Activated naive CD4-positive, alpha-beta T cell treated with anti-CD3 and anti-CD28 coated beads for 36 hours (primary cell): ENCODE measurements at regions of chr4 and their contacts with region 1.

Region 1: DNA sequence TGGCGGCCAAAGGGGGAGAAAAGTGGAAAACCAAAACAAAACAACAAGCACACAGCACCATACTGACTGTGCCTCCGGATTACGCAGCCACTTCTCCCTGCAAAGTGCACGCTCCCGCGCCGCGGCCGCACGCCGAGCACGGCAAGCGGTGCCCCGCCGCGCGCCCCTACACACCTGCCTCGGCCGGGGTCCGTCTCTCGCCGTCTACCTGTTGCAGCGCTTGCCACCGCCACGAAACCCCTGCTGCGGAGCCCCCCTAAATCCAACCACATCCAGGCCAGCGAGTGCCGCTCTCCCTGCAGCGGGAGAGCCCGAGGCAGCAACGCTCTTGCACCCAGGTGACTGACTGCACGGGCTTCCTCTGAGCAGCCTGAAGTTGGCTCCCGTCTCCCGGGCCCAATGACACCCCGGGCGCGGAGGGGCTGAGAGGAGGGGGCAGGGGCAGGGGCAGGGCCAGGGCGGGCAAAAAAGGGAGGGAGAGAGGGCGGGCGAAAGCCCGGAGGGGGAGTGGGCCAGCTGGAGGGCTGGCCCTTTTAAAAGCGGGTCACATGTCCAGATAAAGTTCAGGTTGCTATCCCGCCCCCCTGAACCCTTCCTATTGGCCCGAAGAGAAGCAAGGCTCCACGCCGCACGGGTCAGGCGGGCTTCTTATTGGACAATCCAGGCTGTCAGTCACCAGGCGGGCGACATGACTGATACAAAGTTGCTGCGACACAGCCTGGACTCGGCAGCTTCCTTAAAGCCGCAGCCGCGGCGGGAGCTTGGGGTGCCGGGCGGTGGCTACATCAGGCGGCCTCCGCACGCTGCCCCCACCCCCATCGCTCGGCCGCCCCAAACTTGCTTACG is at the start of gene NR3C2:
- DNase-seq: peak; percentile 99
- H3K4me3 Mint-ChIP-seq: peak within 1 kb of the TSS; percentile 96
- H3K27ac Mint-ChIP-seq: peak within 1 kb of the TSS; percentile 79
- H3K4me1 Mint-ChIP-seq: peaks cover 48% of the 10 kb centered on the region
- H3K27me3 Mint-ChIP-seq: no peaks in the 10 kb centered on the region
- total RNA-seq, gene NR3C2: 5.3 to 6.1 TPM

Region 2: GRCh38 chr4:147617173-147617840 is 824.9 kb before region 1 on chr4 and contains the start of gene TMEM184C:
- CTCF ChIA-PET with region 1: no interaction called
- intact Hi-C with region 1: loop called (anchors 1 kb)
- DNase-seq: peak; percentile 100
- H3K4me3 Mint-ChIP-seq: peak within 1 kb of the TSS; percentile 89
- H3K27ac Mint-ChIP-seq: peak within 1 kb of the TSS; percentile 93
- H3K4me1 Mint-ChIP-seq: peaks cover 23% of the 10 kb centered on the region
- H3K27me3 Mint-ChIP-seq: no peaks in the 10 kb centered on the region
- total RNA-seq, gene TMEM184C: 11.5 to 12.5 TPM

Region 3: GRCh38 chr4:147731580-147732517 is 710.4 kb before region 1 on chr4 and contains the start of gene ARHGAP10:
- CTCF ChIA-PET with region 1: no interaction called
- intact Hi-C with region 1: loop called (anchors 1 kb)
- DNase-seq: peak; percentile 72
- H3K4me3 Mint-ChIP-seq: peak within 1 kb of the TSS; percentile 85
- H3K27ac Mint-ChIP-seq: peak within 1 kb of the TSS; percentile 59
- H3K4me1 Mint-ChIP-seq: peaks cover 34% of the 10 kb centered on the region
- H3K27me3 Mint-ChIP-seq: peaks cover 8% of the 10 kb centered on the region
- total RNA-seq, gene ARHGAP10: 3.6 to 3.8 TPM

Region 4: GRCh38 chr4:147984065-147984777 is 458.0 kb before region 1 on chr4:
- CTCF ChIA-PET with region 1: interaction called, 4 read pairs
- intact Hi-C with region 1: loop called (anchors 5 kb)
- DNase-seq: peak; percentile 19
- H3K4me3 Mint-ChIP-seq: no peak overlapping the region
- H3K27ac Mint-ChIP-seq: no peak overlapping the region
- H3K4me1 Mint-ChIP-seq: peaks cover 9% of the 10 kb centered on the region
- H3K27me3 Mint-ChIP-seq: no peaks in the 10 kb centered on the region

Region 5: GRCh38 chr4:148170408-148171365 is 271.5 kb before region 1 on chr4:
- CTCF ChIA-PET with region 1: no interaction called
- intact Hi-C with region 1: loop called (anchors 2 kb)
- DNase-seq: peak; percentile 30
- H3K4me3 Mint-ChIP-seq: no peak overlapping the region
- H3K27ac Mint-ChIP-seq: no peak overlapping the region
- H3K4me1 Mint-ChIP-seq: peaks cover 28% of the 10 kb centered on the region
- H3K27me3 Mint-ChIP-seq: no peaks in the 10 kb centered on the region

Region 6: GRCh38 chr4:148349153-148349552 is 93.1 kb before region 1 on chr4:
- CTCF ChIA-PET with region 1: no interaction called
- intact Hi-C with region 1: loop called (anchors 1 kb)
- DNase-seq: no peak
- H3K4me3 Mint-ChIP-seq: no peak overlapping the region
- H3K27ac Mint-ChIP-seq: peak overlapping the region; percentile 60
- H3K4me1 Mint-ChIP-seq: peaks cover 45% of the 10 kb centered on the region
- H3K27me3 Mint-ChIP-seq: no peaks in the 10 kb centered on the region

Region 7: DNA sequence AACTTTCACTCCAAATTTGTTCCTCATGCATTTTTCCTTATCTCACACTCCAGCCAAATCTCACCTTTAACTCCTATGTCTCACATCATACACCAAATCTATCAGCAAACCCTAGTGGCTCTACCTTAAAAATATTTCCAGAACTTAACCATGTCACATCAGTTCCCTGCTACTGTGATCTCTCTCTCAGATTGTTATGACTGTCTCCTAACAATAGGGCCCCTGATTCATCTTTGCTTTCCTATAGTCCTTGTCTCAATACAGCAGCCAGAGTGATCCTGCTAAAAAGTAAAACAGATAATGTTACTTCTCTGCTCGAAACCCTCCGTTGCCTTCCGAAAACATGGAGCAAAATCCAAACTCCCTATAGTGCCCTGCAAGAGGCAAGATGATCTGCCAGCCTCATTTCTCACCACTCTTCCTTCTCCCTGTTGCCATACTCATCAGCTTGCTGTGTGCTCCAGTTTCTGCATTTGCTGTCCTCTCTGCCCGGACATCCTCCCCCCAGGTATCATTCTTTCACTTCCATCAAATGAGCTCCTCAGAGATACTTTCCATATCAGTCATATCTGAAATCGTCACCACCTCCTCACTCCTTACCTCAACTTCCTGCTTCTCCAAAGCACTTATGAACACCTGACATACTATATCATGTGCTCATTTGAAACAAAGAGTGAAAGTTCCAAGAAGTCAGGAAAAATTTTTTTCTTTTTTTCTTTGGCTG is 293.4 kb after region 1 on chr4:
- CTCF ChIA-PET with region 1: no interaction called
- intact Hi-C with region 1: loop called (anchors 5 kb)
- DNase-seq: peak; percentile 48
- H3K4me3 Mint-ChIP-seq: no peak overlapping the region
- H3K27ac Mint-ChIP-seq: no peak overlapping the region
- H3K4me1 Mint-ChIP-seq: no peaks in the 10 kb centered on the region
- H3K27me3 Mint-ChIP-seq: no peaks in the 10 kb centered on the region